ENCODE measurements at regions of chr10 and their contacts with region 1.

Region 1: DNA sequence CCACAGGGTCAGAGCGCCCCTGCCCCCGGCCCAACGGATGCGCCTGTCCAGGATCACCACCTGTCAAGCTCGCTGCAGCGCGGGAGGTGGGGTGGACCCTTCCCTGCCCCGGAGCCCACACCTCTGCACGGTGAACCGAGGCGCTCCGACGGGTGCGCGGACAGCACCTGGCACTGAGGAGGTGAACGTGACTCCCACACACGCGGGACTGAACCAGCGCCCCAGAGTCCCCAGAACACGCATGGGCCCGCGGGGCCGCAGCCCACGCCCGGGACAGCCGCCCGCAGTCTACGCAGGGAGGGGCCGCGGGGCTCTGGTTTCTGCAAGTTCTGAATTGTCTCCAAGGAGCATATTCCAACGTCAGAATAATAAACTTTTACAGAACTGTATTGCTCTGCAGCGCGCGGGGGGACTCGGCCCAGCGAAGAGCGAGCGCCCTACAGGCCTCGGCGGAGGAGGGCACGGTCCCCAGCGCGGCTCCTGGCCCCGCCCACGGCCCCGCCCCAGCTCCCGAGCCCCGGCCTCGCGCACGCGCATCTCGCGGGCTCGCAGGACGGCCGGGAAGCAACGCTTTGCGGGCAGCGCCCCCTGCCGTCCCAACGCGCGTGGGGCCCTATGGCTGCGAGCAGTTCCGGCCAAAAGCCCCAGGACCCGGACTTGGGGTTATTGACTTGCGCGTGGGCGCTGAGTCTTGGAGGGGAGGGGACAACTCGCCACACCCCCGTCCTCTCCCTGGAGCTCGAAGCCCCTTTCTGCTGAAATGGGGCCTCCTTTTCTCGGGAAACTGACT is 29.7 kb downstream of the OAT start:
- DNase-seq: peak; percentile 81 to 91 (median 89)
- H3K4me3 ChIP-seq: peak overlapping the region in 5 of 7 experiments; percentile 43 to 70 (median 57)
- H3K27ac ChIP-seq: no peak overlapping the region
- H3K4me1 ChIP-seq: peaks cover 0 to 10% (median 8%) of the 10 kb centered on the region in 4 experiments
- H3K27me3 ChIP-seq: peaks cover 0 to 15% (median 0%) of the 10 kb centered on the region in 5 experiments

Region 2: GRCh38 chr10:123994417-123995081 is 394.5 kb before region 1 on chr10:
- CTCF ChIA-PET with region 1: interaction called, 96 read pairs
- POLR2A ChIA-PET with region 1: interaction called, 3 read pairs
- DNase-seq: peak; percentile 62 to 67 (median 62)
- H3K4me3 ChIP-seq: peak overlapping the region in 5 of 7 experiments; percentile 19 to 66 (median 48)
- H3K27ac ChIP-seq: no peak overlapping the region
- H3K4me1 ChIP-seq: peaks cover 0 to 21% (median 9%) of the 10 kb centered on the region in 4 experiments
- H3K27me3 ChIP-seq: peaks cover 8 to 61% (median 13%) of the 10 kb centered on the region in 5 experiments

Region 3: GRCh38 chr10:124025660-124026588 is 363.1 kb before region 1 on chr10:
- CTCF ChIA-PET with region 1: interaction called, 15 read pairs
- POLR2A ChIA-PET with region 1: no interaction called
- DNase-seq: peak; percentile 58 to 72 (median 71)
- H3K4me3 ChIP-seq: no peak overlapping the region
- H3K27ac ChIP-seq: no peak overlapping the region
- H3K4me1 ChIP-seq: peaks cover 0 to 6% (median 0%) of the 10 kb centered on the region in 4 experiments
- H3K27me3 ChIP-seq: peaks cover 0 to 14% (median 1%) of the 10 kb centered on the region in 5 experiments

Region 4: DNA sequence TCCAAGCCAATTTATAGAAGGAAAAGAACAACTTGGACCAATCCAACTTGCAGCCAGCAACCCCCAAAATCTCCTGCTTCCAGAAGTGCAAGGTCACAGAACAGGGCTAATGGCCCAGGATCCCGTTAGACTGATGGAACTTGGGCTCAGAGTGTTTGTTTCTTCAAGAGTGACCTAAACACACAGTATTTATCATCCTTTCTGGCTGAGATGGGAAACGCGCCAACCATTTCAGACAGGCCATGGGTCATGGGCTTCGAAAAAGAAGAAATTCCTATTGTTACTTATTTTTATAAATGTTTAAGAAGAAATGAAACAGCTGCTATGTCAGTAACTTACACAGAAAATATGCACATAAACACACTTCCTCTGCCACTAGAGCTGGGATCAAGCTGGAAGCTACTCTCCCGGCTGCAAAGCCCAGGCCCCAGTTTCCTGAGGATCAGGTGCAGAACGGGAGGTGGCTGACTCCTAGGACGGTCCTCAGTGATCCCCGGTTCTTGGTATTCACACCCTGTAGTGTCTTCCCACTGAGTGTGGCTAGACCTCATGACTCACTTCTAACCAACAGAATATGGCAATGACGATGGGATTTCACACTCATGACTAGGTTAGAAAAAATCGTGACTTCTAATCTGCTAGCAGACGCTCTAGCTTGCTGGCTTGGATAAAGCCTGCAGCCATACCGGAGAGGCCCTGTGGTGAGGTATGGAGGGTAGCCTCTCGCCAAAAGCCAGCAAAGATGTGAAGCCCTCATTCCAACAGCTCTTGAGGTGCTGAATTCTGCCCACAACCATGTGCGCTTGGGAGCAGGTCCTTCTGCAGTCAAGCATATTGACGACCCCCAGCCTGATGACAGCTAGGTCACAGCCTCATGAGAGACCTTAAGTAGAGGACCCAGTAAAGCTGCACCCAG is 355.8 kb before region 1 on chr10:
- CTCF ChIA-PET with region 1: interaction called, 12 read pairs
- POLR2A ChIA-PET with region 1: no interaction called
- DNase-seq: peak in 2 of 3 donors; percentile 45 to 63
- H3K4me3 ChIP-seq: no peak overlapping the region
- H3K27ac ChIP-seq: no peak overlapping the region
- H3K4me1 ChIP-seq: peaks cover 8 to 16% (median 14%) of the 10 kb centered on the region in 4 experiments
- H3K27me3 ChIP-seq: peaks cover 0 to 10% (median 0%) of the 10 kb centered on the region in 5 experiments

Region 5: DNA sequence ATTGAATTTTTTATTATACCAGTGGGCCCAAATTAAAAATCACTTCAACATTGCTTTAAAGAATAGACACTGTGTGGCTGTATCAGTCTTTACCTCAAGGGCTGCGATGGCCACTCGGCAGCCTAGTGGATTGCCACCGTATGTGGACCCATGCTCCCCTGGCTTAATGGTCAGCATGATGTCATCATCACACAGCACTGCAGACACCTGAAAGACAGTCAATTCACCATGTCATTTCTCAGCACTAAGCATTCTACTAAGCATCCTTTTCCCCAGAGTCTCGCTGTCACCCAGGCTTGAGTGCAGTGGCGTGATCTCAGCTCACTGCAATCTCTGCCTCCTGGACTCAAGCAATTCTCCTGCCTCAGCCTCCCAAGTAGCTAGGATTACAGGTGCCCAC is 12.6 kb after region 1 on chr10:
- CTCF ChIA-PET with region 1: interaction called, 13 read pairs
- POLR2A ChIA-PET with region 1: no interaction called
- DNase-seq: no peak
- H3K4me3 ChIP-seq: no peak overlapping the region
- H3K27ac ChIP-seq: no peak overlapping the region
- H3K4me1 ChIP-seq: peaks cover 2 to 4% (median 4%) of the 10 kb centered on the region in 4 experiments
- H3K27me3 ChIP-seq: no peaks in the 10 kb centered on the region

Region 6: DNA sequence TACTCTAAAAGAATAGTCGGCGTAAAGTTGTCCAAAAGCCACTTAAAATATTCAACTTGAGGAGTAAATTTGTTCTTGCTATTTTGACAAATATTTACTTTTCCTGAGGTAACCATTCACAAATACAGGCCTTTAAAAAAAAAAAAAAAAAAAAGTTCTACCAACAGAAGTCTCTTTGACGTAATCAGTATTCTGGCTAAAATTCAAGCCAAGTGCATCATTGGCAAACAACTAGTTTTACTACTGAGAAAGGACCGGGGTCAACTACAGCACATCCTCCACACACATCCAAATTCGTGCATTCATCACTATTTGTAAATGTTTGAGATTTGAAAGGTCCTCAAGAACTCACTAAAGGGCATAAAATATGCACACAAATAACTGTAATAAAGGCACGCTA is 27.7 kb after region 1 on chr10:
- CTCF ChIA-PET with region 1: no interaction called
- POLR2A ChIA-PET with region 1: no interaction called
- DNase-seq: no peak
- H3K4me3 ChIP-seq: no peak overlapping the region
- H3K27ac ChIP-seq: no peak overlapping the region
- H3K4me1 ChIP-seq: peaks cover 0 to 16% (median 13%) of the 10 kb centered on the region in 4 experiments
- H3K27me3 ChIP-seq: peaks cover 0 to 20% (median 9%) of the 10 kb centered on the region in 5 experiments

Region 7: GRCh38 chr10:124688889-124689670 is 300.1 kb after region 1 on chr10:
- CTCF ChIA-PET with region 1: no interaction called
- POLR2A ChIA-PET with region 1: no interaction called
- DNase-seq: peak in 1 of 3 donors; percentile 14
- H3K4me3 ChIP-seq: no peak overlapping the region
- H3K27ac ChIP-seq: no peak overlapping the region
- H3K4me1 ChIP-seq: peaks cover 16 to 70% (median 29%) of the 10 kb centered on the region in 4 experiments
- H3K27me3 ChIP-seq: no peaks in the 10 kb centered on the region

Measured in common myeloid progenitor, CD34-positive (primary cell).